Activated CD8-positive, alpha-beta T cell treated with anti-CD3 and anti-CD28 coated beads, Interleukin-2, amount 10 ng/mL, durations not matched to agents 7 days and 5 days (primary cell): ENCODE measurements at regions of chr2 and their contacts with region 1.

Region 1: GRCh38 chr2:102251042-102251848 is 60.1 kb upstream of the IL1RL1 start:
- DNase-seq: peak; percentile 76
- ATAC-seq: peak; percentile 78
- H3K4me3 Mint-ChIP-seq: peak overlapping the region; percentile 79
- H3K27ac Mint-ChIP-seq: peak overlapping the region; percentile 62
- H3K4me1 Mint-ChIP-seq: peaks cover 45% of the 10 kb centered on the region
- H3K27me3 Mint-ChIP-seq: peaks cover 5% of the 10 kb centered on the region

Region 2: DNA sequence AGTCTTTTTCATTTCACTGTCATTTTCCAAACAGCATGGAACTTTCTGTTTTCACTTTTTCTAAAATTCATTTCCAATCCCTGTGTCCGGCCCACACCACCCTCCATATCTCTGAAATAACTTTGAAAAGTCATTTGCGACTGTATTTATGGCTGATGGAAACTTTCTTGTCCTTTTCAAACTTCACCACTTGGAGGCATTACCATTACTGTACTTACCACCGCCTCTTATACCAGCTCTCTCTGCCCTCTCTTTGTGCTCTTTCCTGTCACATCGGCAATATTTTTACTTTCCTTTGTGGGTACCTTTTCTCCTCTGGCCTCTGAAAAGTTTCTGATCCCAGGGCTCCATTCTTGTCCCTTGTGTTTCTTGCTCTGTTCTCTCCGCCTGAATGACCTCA is 20.6 kb after region 1 on chr2:
- CTCF ChIA-PET with region 1: interaction called, 31 read pairs
- POLR2A ChIA-PET with region 1: interaction called, 4 read pairs
- DNase-seq: no peak
- ATAC-seq: peak; percentile 78
- H3K4me3 Mint-ChIP-seq: peak overlapping the region; percentile 54
- H3K27ac Mint-ChIP-seq: peak overlapping the region; percentile 83
- H3K4me1 Mint-ChIP-seq: peaks cover 53% of the 10 kb centered on the region
- H3K27me3 Mint-ChIP-seq: peaks cover 2% of the 10 kb centered on the region

Region 3: GRCh38 chr2:102278720-102279390 is 27.6 kb after region 1 on chr2:
- CTCF ChIA-PET with region 1: interaction called, 18 read pairs
- POLR2A ChIA-PET with region 1: interaction called, 4 read pairs
- DNase-seq: no peak
- ATAC-seq: no peak
- H3K4me3 Mint-ChIP-seq: no peak overlapping the region
- H3K27ac Mint-ChIP-seq: peak overlapping the region; percentile 80
- H3K4me1 Mint-ChIP-seq: peaks cover 72% of the 10 kb centered on the region
- H3K27me3 Mint-ChIP-seq: no peaks in the 10 kb centered on the region

Region 4: DNA sequence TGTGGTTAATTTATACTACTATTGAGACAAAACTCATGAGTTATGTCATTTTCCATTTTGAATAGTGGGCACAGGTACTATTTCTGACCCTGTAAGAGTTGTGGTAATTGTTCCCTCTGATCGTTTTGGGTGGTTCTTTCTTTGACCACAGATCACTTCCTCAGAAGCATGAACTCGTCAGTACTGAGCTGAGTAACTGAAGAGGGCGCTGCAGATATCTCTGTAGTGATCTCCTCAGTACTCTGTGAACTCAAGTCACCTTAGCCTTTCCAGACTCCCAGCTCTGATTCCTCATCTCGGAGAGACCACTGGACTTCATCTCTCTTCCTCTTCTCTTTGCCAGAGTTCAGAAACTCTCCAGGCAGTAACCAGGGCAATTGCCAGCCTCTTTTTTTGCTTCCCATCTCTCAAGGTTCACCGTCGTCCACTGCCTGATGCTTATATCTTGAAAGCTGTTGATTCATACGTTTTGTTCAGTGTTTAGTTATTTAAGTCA is 50.7 kb after region 1 on chr2:
- CTCF ChIA-PET with region 1: interaction called, 14 read pairs
- POLR2A ChIA-PET with region 1: no interaction called
- DNase-seq: peak; percentile 82
- ATAC-seq: peak; percentile 98
- H3K4me3 Mint-ChIP-seq: peak overlapping the region; percentile 32
- H3K27ac Mint-ChIP-seq: peak overlapping the region; percentile 65
- H3K4me1 Mint-ChIP-seq: peaks cover 36% of the 10 kb centered on the region
- H3K27me3 Mint-ChIP-seq: no peaks in the 10 kb centered on the region

Region 5: GRCh38 chr2:102321941-102322719 is 70.9 kb after region 1 on chr2:
- CTCF ChIA-PET with region 1: no interaction called
- POLR2A ChIA-PET with region 1: no interaction called
- DNase-seq: no peak
- ATAC-seq: no peak
- H3K4me3 Mint-ChIP-seq: no peak overlapping the region
- H3K27ac Mint-ChIP-seq: no peak overlapping the region
- H3K4me1 Mint-ChIP-seq: no peaks in the 10 kb centered on the region
- H3K27me3 Mint-ChIP-seq: no peaks in the 10 kb centered on the region

Region 6: DNA sequence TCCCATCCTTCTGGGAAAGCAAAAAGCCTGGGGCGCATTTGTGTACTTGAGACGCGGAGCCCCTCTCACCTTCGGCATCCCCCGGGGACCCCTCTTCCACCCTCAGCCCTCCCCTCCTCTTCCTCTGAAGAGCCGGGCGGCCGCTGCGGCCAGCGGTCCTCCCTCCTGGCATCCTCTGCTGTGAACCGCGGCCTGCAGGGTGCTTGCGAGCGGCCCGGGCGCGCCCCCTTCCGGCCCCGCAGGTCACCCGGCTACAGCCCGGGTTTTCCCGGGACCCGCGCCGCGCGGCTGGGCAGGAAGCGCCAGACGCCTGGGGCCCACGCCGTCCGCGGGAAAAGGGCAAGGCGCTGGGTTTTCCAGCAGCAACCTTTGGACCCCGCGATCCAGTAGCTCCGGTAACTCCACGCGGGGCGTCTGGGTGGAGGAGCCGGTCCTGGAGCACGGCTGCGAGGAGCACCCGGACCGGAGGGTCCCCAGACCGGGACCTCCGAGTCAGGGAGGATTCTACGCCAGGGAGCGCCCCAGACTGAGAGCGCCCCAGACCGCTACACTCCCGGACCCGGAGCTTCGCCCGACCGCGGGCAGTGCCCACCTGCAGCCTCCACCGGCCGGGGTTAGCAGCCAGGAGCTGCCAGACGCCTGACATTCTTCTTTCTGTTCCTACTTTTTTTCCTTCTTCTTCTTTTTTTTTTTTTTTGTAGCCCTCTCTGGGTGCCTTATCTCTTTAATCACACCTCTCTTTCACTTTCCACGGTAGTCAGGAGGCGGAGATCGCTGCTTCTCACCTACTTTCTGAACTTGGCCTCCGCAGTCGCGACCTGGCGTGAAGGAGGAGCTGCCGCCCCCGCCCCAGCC is 104.5 kb after region 1 on chr2 and contains the start of gene IL18R1:
- CTCF ChIA-PET with region 1: interaction called, 17 read pairs
- POLR2A ChIA-PET with region 1: no interaction called
- DNase-seq: peak; percentile 81
- ATAC-seq: peak; percentile 92
- H3K4me3 Mint-ChIP-seq: peak within 1 kb of the TSS; percentile 100
- H3K27ac Mint-ChIP-seq: peak within 1 kb of the TSS; percentile 96
- H3K4me1 Mint-ChIP-seq: peaks cover 54% of the 10 kb centered on the region
- H3K27me3 Mint-ChIP-seq: no peaks in the 10 kb centered on the region
- total RNA-seq, gene IL18R1: 50.2 to 53.1 TPM

Region 7: DNA sequence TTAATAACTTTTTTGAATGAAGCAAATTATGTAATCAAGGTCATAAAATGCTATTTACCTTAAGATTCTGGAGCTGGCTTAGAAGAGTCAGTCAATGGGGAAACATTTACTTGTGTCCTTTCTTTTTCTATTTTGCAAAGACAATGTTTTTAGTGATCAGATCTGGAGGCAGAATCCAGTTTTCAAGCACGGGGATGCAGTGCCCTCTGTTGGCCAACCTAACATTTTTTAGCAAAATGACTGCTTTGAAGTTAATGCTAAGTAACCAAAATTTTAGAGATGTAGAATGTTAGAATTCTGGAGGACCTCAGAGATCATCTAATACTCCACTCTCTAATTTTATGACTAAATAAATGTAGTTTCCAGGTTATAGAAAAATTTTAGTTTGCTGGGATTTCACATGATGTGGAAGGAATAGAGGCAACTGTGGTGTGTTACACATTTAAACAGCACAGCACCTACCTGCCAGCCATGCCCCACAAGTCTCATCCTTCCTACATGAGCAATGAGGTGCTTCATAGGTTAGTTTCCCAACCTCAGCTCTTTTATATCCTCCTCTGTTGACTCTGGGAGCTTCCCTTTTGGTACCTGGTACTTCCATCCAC is 198.2 kb after region 1 on chr2:
- CTCF ChIA-PET with region 1: interaction called, 27 read pairs
- POLR2A ChIA-PET with region 1: no interaction called
- DNase-seq: peak; percentile 81
- ATAC-seq: no peak
- H3K4me3 Mint-ChIP-seq: no peak overlapping the region
- H3K27ac Mint-ChIP-seq: peak overlapping the region; percentile 47
- H3K4me1 Mint-ChIP-seq: peaks cover 22% of the 10 kb centered on the region
- H3K27me3 Mint-ChIP-seq: no peaks in the 10 kb centered on the region